ENCODE measurements at regions of chr16 and their contacts with region 1.

Region 1: GRCh38 chr16:53130159-53131049 is 75.6 kb downstream of the CHD9 start:
- DNase-seq: peak; percentile 92
- ATAC-seq: peak; percentile 89
- H3K4me3 ChIP-seq: peak overlapping the region; percentile 60
- H3K27ac ChIP-seq: peak overlapping the region; percentile 94
- H3K4me1 ChIP-seq: peaks cover 7% of the 10 kb centered on the region
- H3K27me3 ChIP-seq: no peaks in the 10 kb centered on the region
- CTCF ChIP-seq: peak; percentile 90
- POLR2A ChIP-seq: peak; percentile 38
- RAD21 ChIP-seq: peak; percentile 75

Region 2: DNA sequence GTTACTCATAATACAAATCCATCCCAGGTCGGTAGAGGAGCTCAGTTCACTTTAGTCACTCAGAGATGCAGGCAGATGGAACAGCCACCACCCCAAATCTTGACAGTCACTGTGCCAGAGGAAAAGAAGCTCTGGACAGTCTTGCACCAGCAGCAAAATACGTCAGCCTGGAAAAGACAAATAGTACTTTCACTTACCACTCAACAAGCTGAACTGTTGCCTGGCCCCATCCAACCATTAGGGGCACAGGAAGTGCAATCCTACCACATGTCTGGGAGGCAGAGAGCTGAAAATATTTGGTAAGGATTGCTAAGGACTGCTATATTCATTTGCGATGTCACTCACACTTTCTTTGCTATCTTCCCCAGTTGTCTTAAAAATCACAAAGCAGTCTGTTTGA is 344.3 kb before region 1 on chr16:
- CTCF ChIA-PET with region 1: no interaction called
- POLR2A ChIA-PET with region 1: no interaction called
- dilution Hi-C with region 1: no loop called
- in situ Hi-C with region 1: no loop called
- intact Hi-C with region 1: no loop called
- DNase-seq: no peak
- ATAC-seq: no peak
- H3K4me3 ChIP-seq: no peak overlapping the region
- H3K27ac ChIP-seq: no peak overlapping the region
- H3K4me1 ChIP-seq: no peaks in the 10 kb centered on the region
- H3K27me3 ChIP-seq: no peaks in the 10 kb centered on the region
- CTCF ChIP-seq: no peak
- POLR2A ChIP-seq: no peak
- RAD21 ChIP-seq: no peak

Region 3: GRCh38 chr16:53061701-53062159 is 68.7 kb before region 1 on chr16:
- CTCF ChIA-PET with region 1: interaction called, 3 read pairs
- POLR2A ChIA-PET with region 1: no interaction called
- dilution Hi-C with region 1: no loop called
- in situ Hi-C with region 1: loop called (anchors 5 kb)
- intact Hi-C with region 1: no loop called
- DNase-seq: no peak
- ATAC-seq: no peak
- H3K4me3 ChIP-seq: no peak overlapping the region
- H3K27ac ChIP-seq: no peak overlapping the region
- H3K4me1 ChIP-seq: peaks cover 3% of the 10 kb centered on the region
- H3K27me3 ChIP-seq: no peaks in the 10 kb centered on the region
- CTCF ChIP-seq: no peak
- POLR2A ChIP-seq: no peak
- RAD21 ChIP-seq: no peak

Region 4: GRCh38 chr16:53091466-53092211 is 38.8 kb before region 1 on chr16:
- CTCF ChIA-PET with region 1: no interaction called
- POLR2A ChIA-PET with region 1: no interaction called
- dilution Hi-C with region 1: no loop called
- in situ Hi-C with region 1: loop called (anchors 5 kb)
- intact Hi-C with region 1: loop called (anchors 2 kb)
- DNase-seq: peak; percentile 92
- ATAC-seq: peak; percentile 48
- H3K4me3 ChIP-seq: no peak overlapping the region; the same call in 1 of the 2 replicates
- H3K27ac ChIP-seq: peak overlapping the region; percentile 81
- H3K4me1 ChIP-seq: peaks cover 16% of the 10 kb centered on the region
- H3K27me3 ChIP-seq: no peaks in the 10 kb centered on the region
- CTCF ChIP-seq: no peak
- POLR2A ChIP-seq: no peak
- RAD21 ChIP-seq: no peak; the same call in 1 of the 2 replicates

Region 5: DNA sequence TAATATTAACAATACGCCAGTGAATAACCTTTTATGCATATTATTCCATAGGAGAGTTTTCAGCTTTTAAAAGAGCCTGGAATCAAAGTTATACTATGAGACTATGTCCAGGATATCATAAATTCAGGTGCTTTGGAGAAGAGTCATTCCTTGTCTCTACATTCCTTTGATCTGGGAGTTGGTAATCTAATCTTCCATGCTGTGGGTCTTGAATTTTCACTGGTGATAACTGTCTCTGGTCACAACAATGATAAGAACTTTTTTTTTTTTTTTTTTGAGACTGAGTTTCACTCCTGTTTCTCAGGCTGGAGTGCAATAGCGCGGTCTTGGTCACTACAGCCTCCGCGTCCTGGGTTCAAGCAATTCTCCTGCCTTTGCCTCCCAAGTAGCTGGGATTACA is 24.8 kb before region 1 on chr16:
- CTCF ChIA-PET with region 1: no interaction called
- POLR2A ChIA-PET with region 1: no interaction called
- dilution Hi-C with region 1: no loop called
- in situ Hi-C with region 1: no loop called
- intact Hi-C with region 1: no loop called
- DNase-seq: no peak
- ATAC-seq: no peak
- H3K4me3 ChIP-seq: no peak overlapping the region
- H3K27ac ChIP-seq: no peak overlapping the region
- H3K4me1 ChIP-seq: 0 out of 2 replicates have a peak, but pooled peaks cover 2% of the 10 kb centered on the region
- H3K27me3 ChIP-seq: no peaks in the 10 kb centered on the region
- CTCF ChIP-seq: no peak
- POLR2A ChIP-seq: no peak
- RAD21 ChIP-seq: no peak

Region 6: GRCh38 chr16:53207810-53208752 is 77.7 kb after region 1 on chr16:
- CTCF ChIA-PET with region 1: no interaction called
- POLR2A ChIA-PET with region 1: interaction called, 3 read pairs
- dilution Hi-C with region 1: no loop called
- in situ Hi-C with region 1: no loop called
- intact Hi-C with region 1: loop called (anchors 1 kb)
- DNase-seq: peak; percentile 83
- ATAC-seq: peak; percentile 91
- H3K4me3 ChIP-seq: peak overlapping the region; percentile 88
- H3K27ac ChIP-seq: peak overlapping the region; percentile 92
- H3K4me1 ChIP-seq: no peaks in the 10 kb centered on the region; the same call in 1 of the 2 replicates
- H3K27me3 ChIP-seq: no peaks in the 10 kb centered on the region
- CTCF ChIP-seq: peak; percentile 72
- POLR2A ChIP-seq: no peak
- RAD21 ChIP-seq: peak; percentile 64

Region 7: GRCh38 chr16:53220585-53220984 is 90.2 kb after region 1 on chr16:
- CTCF ChIA-PET with region 1: no interaction called
- POLR2A ChIA-PET with region 1: no interaction called
- dilution Hi-C with region 1: no loop called
- in situ Hi-C with region 1: no loop called
- intact Hi-C with region 1: loop called (anchors 5 kb)
- DNase-seq: peak; percentile 58
- ATAC-seq: peak; percentile 76
- H3K4me3 ChIP-seq: no peak overlapping the region
- H3K27ac ChIP-seq: no peak overlapping the region
- H3K4me1 ChIP-seq: peaks cover 3% of the 10 kb centered on the region
- H3K27me3 ChIP-seq: no peaks in the 10 kb centered on the region
- CTCF ChIP-seq: peak; percentile 40
- POLR2A ChIP-seq: no peak
- RAD21 ChIP-seq: peak; percentile 53

Region 8: GRCh38 chr16:53282975-53283946 is 152.9 kb after region 1 on chr16:
- CTCF ChIA-PET with region 1: interaction called, 3 read pairs
- POLR2A ChIA-PET with region 1: no interaction called
- dilution Hi-C with region 1: no loop called
- in situ Hi-C with region 1: no loop called
- intact Hi-C with region 1: loop called (anchors 2 kb)
- DNase-seq: peak; percentile 49
- ATAC-seq: no peak
- H3K4me3 ChIP-seq: no peak overlapping the region
- H3K27ac ChIP-seq: no peak overlapping the region
- H3K4me1 ChIP-seq: no peaks in the 10 kb centered on the region
- H3K27me3 ChIP-seq: no peaks in the 10 kb centered on the region
- CTCF ChIP-seq: peak; percentile 50
- POLR2A ChIP-seq: no peak
- RAD21 ChIP-seq: peak; percentile 57